MCF 10A (cell line): ENCODE measurements at regions of chr14 and their contacts with region 1.

Region 1: GRCh38 chr14:50038398-50039119 is 77.8 kb downstream of the VCPKMT start:
- DNase-seq: peak; percentile 94
- H3K4me3 Mint-ChIP-seq: peak overlapping the region; percentile 40
- H3K27ac Mint-ChIP-seq: peak overlapping the region; percentile 89
- H3K4me1 Mint-ChIP-seq: peaks cover 43% of the 10 kb centered on the region
- H3K27me3 Mint-ChIP-seq: no peaks in the 10 kb centered on the region
- CTCF ChIP-seq: peak; percentile 16

Region 2: DNA sequence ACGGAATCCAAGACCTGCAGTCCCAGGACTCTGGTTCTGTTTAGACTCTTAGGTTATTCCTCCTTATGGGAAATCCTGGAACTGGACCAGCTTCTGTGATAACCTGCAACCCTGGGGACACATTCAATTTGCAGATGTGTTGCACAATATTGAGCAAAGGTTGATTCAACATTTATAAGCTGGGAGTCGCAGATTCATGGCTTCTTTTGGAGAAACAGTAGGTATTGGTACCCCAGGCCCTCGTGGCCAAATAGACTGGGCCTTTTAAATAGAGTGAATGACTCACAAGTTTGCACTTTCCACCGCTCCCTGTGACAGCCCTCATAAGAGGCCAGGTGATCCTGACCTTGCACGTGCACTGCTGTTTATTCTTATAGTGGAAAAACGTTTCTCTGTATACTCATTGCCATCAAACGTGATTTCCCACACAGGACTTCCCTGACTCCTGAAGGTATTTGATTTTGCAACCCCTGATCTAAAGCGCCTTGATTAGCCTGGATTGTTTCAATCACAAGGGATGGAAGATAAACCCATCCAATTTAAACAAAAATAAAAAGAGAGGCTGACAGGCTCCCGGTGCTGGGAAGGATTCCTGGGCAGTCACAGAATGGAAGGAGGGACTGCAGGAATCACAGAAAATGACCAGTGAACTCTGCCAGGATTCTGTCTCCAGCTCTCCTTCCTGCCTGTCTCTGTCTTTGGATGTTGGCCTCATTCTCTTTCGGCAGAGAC is 20.2 kb before region 1 on chr14:
- CTCF ChIA-PET with region 1: interaction called, 7 read pairs
- POLR2A ChIA-PET with region 1: interaction called, 44 read pairs
- intact Hi-C with region 1: loop called (anchors 1 kb)
- DNase-seq: peak; percentile 47
- H3K4me3 Mint-ChIP-seq: no peak overlapping the region
- H3K27ac Mint-ChIP-seq: peak overlapping the region; percentile 51
- H3K4me1 Mint-ChIP-seq: peaks cover 12% of the 10 kb centered on the region
- H3K27me3 Mint-ChIP-seq: no peaks in the 10 kb centered on the region
- CTCF ChIP-seq: no peak

Region 3: DNA sequence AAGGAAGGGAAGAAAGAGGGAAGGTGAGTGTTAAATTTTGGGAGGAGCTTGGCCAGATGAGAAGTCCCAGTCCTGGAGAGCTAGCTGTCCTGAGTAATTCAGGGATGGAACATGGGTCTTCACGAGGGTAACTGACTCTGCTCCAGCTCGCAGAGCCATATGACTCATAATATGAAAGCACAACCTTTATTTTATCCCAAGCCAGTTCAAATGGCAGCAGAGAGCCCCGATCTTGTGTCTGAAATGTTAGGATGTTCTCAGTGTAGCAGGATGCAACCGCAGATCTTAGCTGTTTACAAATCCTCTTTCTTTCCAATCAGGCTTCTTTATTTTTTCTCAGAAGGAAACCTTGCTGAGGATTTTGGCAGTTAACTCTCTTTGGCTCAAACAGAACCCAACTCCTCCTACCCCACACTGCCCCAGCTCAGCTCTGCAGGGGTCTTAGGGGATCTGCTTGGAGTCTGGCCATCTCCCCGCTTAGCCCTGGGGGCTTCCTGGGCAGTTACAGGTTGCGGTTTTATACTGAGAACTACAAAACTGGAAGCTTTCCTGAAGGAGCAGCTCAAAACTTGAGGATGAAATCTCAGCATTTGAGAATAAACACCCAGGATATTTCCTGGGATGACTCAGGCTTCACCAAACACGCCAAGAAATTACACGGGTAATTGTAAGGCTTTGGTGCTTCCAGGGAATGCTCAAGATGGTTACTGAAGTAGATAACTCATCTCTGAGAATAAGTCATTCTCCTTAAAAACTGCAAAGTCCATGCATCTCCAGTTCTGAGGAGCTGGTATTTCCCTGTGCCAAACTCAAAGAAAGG is 14.7 kb before region 1 on chr14:
- CTCF ChIA-PET with region 1: interaction called, 9 read pairs
- POLR2A ChIA-PET with region 1: interaction called, 44 read pairs
- intact Hi-C with region 1: no loop called
- DNase-seq: peak; percentile 78
- H3K4me3 Mint-ChIP-seq: no peak overlapping the region
- H3K27ac Mint-ChIP-seq: peak overlapping the region; percentile 90
- H3K4me1 Mint-ChIP-seq: peaks cover 15% of the 10 kb centered on the region
- H3K27me3 Mint-ChIP-seq: no peaks in the 10 kb centered on the region
- CTCF ChIP-seq: no peak

Region 4: DNA sequence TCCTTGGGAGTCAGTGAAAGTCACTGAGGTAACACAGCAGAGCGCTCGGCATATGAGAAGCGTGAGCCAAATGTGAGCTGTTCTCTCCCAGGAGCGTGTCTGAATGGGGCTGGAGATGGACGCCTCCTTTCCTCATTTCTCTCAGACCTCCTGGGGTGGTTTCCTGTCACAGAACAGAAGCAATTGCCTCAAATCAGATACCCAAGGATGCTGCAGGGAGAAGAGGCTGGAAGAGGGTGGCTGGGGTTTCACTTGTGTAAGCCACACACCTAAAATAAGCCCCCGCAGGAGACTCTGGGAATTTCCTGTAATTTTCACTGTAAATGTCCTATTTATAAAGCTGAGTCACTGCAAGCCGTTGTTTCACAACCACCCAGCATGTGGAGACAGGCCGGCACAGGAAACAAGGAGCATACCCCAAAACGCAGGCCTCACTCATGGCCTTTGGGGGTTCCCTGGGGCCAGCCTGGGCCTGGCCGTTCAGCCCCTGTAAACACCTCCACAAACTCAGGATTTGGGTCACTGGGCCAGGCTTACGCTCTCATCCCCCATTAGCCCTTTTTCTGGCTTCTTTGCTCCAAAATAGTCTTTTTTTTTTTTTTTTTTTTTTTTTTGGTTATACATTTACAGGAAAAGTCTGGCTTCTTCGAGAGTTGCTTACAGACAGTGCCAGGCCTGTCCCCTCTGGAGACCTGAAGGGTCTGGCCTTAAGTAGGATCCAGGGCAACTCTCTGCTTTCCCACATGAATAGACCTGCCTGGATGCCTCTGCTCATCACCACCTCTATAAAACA is 22.5 kb after region 1 on chr14:
- CTCF ChIA-PET with region 1: interaction called, 9 read pairs
- POLR2A ChIA-PET with region 1: interaction called, 53 read pairs
- intact Hi-C with region 1: loop called (anchors 2 kb)
- DNase-seq: peak; percentile 96
- H3K4me3 Mint-ChIP-seq: no peak overlapping the region
- H3K27ac Mint-ChIP-seq: peak overlapping the region; percentile 84
- H3K4me1 Mint-ChIP-seq: peaks cover 20% of the 10 kb centered on the region
- H3K27me3 Mint-ChIP-seq: no peaks in the 10 kb centered on the region
- CTCF ChIP-seq: no peak

Region 5: DNA sequence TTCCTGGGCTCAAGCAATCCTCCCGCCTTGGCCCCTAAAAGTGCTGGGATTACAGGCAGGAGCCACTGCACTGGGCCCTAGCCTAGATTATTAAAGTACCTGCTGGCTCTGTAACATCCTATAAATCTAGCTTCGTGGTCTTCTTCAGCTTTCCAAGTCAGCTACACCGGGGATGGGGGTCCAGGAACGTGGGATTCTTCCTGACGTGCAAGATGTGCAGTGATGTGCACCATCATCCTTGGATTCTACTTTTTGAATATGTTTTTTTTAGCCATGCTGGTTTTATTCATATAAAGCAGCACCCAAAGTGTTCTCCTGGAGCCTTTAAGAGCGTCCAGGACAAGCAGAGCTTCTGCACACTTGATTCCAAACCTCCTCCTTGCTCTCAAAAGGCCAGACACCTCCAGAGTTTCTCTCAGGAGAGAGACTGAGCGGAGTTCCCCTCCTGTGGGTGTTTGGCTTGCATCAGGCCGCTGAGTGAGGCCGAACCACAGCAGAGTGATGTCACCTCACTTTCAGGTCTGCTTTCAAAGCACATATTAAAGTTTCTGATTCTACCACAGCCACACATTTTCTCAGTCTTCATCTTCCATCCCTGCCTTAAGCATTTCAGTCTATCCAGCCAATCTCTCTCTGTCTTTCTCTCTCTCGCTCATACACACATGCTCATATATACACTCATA is 44.4 kb after region 1 on chr14:
- CTCF ChIA-PET with region 1: interaction called, 7 read pairs
- POLR2A ChIA-PET with region 1: interaction called, 17 read pairs
- intact Hi-C with region 1: no loop called
- DNase-seq: no peak
- H3K4me3 Mint-ChIP-seq: no peak overlapping the region
- H3K27ac Mint-ChIP-seq: no peak overlapping the region
- H3K4me1 Mint-ChIP-seq: peaks cover 26% of the 10 kb centered on the region
- H3K27me3 Mint-ChIP-seq: no peaks in the 10 kb centered on the region
- CTCF ChIP-seq: no peak

Region 6: DNA sequence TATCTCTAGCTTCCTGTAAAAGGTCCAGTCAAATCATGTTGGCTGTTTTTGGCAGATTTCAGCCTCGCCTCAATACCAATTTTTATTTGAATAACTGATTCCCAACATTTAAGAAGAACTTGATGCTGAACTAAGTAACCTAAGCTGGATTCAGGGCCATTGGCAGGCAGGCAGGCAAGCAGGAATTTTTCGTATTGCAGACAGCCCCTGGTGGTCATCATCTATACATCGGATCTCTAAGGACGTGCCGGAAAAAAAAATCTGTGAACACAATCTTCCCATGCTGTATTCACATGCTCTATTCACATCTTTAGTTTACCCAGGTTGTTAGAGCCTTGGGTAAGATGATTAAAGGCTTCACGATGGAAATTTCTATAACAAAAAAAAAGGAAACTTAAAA is 70.8 kb after region 1 on chr14:
- CTCF ChIA-PET with region 1: interaction called, 8 read pairs
- POLR2A ChIA-PET with region 1: interaction called, 3 read pairs
- intact Hi-C with region 1: loop called (anchors 2 kb)
- DNase-seq: no peak
- H3K4me3 Mint-ChIP-seq: no peak overlapping the region
- H3K27ac Mint-ChIP-seq: no peak overlapping the region
- H3K4me1 Mint-ChIP-seq: no peaks in the 10 kb centered on the region
- H3K27me3 Mint-ChIP-seq: no peaks in the 10 kb centered on the region
- CTCF ChIP-seq: peak; percentile 14